Mammary epithelial cell (primary cell): ENCODE measurements at regions of chrX and their contacts with region 1.

Region 1: GRCh38 chrX:109384699-109385098 is 97.2 kb downstream of the GUCY2F start:
- DNase-seq: no peak
- H3K4me3 ChIP-seq: no peak overlapping the region
- H3K27ac ChIP-seq: no peak overlapping the region
- H3K4me1 ChIP-seq: peaks cover under 1% of the 10 kb centered on the region
- H3K27me3 ChIP-seq: peaks cover 7% of the 10 kb centered on the region
- CTCF ChIP-seq: peak; percentile 47 to 63

Region 2: GRCh38 chrX:108701633-108702032 is 683.1 kb before region 1 on chrX:
- CTCF ChIA-PET with region 1: interaction called, 5 read pairs
- dilution Hi-C with region 1: no loop called
- in situ Hi-C with region 1: loop called in 1 of 2 experiments (anchors 25 kb)
- intact Hi-C with region 1: loop called (anchors 2 kb)
- DNase-seq: no peak
- H3K4me3 ChIP-seq: no peak overlapping the region
- H3K27ac ChIP-seq: no peak overlapping the region
- H3K4me1 ChIP-seq: no peaks in the 10 kb centered on the region
- H3K27me3 ChIP-seq: no peaks in the 10 kb centered on the region
- CTCF ChIP-seq: no peak

Region 3: GRCh38 chrX:109218761-109219160 is 165.9 kb before region 1 on chrX:
- CTCF ChIA-PET with region 1: no interaction called
- dilution Hi-C with region 1: no loop called
- in situ Hi-C with region 1: no loop called
- intact Hi-C with region 1: loop called (anchors 5 kb)
- DNase-seq: no peak
- H3K4me3 ChIP-seq: no peak overlapping the region
- H3K27ac ChIP-seq: no peak overlapping the region
- H3K4me1 ChIP-seq: no peaks in the 10 kb centered on the region
- H3K27me3 ChIP-seq: peaks cover 12% of the 10 kb centered on the region
- CTCF ChIP-seq: no peak